ENCODE measurements at regions of chr14 and their contacts with region 1.

Region 1: DNA sequence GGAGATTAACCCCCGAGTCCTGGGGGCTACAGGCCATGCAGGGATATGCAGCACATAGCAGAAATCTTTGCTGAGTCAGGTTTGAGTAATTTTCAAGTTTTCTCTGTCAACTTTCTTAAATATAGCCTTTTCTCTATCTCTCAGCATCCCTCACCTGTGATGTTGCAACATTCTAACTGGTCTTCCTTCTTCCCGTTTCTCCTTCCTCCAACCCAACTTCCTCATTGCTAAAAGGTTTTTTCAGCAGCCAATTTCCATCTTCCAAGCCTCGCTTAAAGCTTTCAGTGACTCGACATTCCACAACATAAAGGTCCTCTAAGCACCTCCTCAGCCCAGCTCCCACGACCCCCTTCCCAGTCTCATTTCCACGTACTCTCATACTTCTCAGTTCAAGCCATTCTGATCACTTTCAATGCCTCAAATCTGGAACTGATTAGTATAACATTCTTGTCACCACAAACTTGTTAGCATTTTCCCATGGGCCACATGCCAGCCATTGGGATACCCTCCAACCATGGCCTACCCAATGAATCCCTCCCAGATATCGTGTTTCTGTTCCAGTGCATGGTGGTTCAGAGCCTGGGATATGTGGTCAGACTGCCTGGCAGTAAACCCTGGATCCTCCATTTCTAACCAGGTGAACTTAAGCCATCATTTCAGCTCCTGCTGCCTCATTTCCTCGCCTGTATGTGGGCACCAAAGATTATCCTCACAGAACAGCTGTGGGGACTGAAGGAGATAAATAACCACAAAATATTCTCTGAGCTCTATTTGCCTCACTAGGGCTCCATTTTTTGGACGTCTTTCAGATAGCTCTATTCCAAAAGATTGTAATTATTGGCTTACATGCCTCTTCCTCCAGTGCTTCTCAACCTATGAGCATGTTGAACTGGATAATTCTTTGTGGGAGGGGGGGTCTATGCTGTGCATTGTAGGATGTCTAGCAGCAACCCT is 65.8 kb downstream of the KCNK10 start:
- DNase-seq: no peak
- H3K4me3 ChIP-seq: no peak overlapping the region
- H3K27ac ChIP-seq: no peak overlapping the region
- H3K4me1 ChIP-seq: no peaks in the 10 kb centered on the region
- H3K27me3 ChIP-seq: no peaks in the 10 kb centered on the region
- CTCF ChIP-seq: no peak
- EP300 ChIP-seq: no peak
- POLR2A ChIP-seq: no peak
- RAD21 ChIP-seq: no peak

Region 2: GRCh38 chr14:88063845-88064244 is 193.4 kb before region 1 on chr14:
- CTCF ChIA-PET with region 1: no interaction called
- POLR2A ChIA-PET with region 1: no interaction called
- DNase-seq: no peak
- H3K4me3 ChIP-seq: no peak overlapping the region
- H3K27ac ChIP-seq: no peak overlapping the region
- H3K4me1 ChIP-seq: no peaks in the 10 kb centered on the region
- H3K27me3 ChIP-seq: no peaks in the 10 kb centered on the region
- CTCF ChIP-seq: no peak
- EP300 ChIP-seq: no peak
- POLR2A ChIP-seq: no peak
- RAD21 ChIP-seq: no peak

Region 3: DNA sequence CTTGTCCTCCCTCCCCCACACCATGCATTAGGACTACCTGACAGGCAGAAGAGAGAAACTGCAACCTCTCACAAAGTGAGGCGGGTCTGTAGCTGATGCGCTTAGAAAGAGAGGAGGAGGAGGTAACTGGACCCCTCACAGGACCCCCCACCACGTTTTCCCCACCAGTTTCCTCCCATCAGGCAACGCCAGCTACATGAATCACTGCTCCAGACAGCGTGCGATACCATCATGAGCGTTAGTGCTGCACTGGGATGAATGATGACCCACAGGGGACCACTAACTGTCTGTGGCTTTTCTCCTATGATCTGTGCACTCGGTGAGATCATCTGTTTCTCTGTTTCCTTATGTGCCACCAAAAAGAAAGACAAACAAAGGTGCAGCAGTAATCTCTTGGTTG is 12.0 kb before region 1 on chr14:
- CTCF ChIA-PET with region 1: interaction called, 11 read pairs
- POLR2A ChIA-PET with region 1: no interaction called
- DNase-seq: no peak
- H3K4me3 ChIP-seq: no peak overlapping the region
- H3K27ac ChIP-seq: no peak overlapping the region
- H3K4me1 ChIP-seq: no peaks in the 10 kb centered on the region; a peak in 1 of 7 replicates
- H3K27me3 ChIP-seq: no peaks in the 10 kb centered on the region
- CTCF ChIP-seq: no peak
- EP300 ChIP-seq: no peak
- POLR2A ChIP-seq: no peak
- RAD21 ChIP-seq: no peak

Region 4: DNA sequence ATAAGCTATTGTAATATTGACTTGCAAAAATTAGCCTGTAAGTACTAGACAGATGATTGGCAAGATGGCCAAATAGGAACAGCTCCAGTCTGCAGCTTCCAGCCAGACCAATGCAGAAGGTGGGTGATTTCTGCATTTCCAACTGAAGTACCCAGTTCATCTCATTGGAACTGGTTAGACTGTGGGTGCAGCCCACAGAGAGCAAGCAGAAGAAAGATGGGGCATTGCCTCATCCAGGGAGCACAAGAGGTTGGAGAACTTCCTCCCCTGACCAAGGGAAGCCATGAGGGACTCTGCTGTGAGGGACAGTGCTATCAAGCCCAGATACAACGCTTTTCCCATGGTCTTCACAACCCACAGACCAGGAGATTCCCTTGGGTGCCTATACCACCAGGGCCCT is 112.2 kb after region 1 on chr14:
- CTCF ChIA-PET with region 1: no interaction called
- POLR2A ChIA-PET with region 1: no interaction called
- DNase-seq: no peak
- H3K4me3 ChIP-seq: no peak overlapping the region
- H3K27ac ChIP-seq: no peak overlapping the region
- H3K4me1 ChIP-seq: peaks cover 0 to 8% (median 3%) of the 10 kb centered on the region in 4 experiments; a peak in 3 of 7 replicates
- H3K27me3 ChIP-seq: no peaks in the 10 kb centered on the region
- CTCF ChIP-seq: no peak
- EP300 ChIP-seq: no peak
- POLR2A ChIP-seq: no peak
- RAD21 ChIP-seq: no peak

Region 5: GRCh38 chr14:88411039-88411438 is 153.8 kb after region 1 on chr14:
- CTCF ChIA-PET with region 1: no interaction called
- POLR2A ChIA-PET with region 1: no interaction called
- DNase-seq: peak in 1 of 2 experiments; percentile 42
- H3K4me3 ChIP-seq: no peak overlapping the region
- H3K27ac ChIP-seq: no peak overlapping the region
- H3K4me1 ChIP-seq: no peaks in the 10 kb centered on the region
- H3K27me3 ChIP-seq: no peaks in the 10 kb centered on the region
- CTCF ChIP-seq: no peak
- EP300 ChIP-seq: no peak
- POLR2A ChIP-seq: no peak
- RAD21 ChIP-seq: no peak

Region 6: DNA sequence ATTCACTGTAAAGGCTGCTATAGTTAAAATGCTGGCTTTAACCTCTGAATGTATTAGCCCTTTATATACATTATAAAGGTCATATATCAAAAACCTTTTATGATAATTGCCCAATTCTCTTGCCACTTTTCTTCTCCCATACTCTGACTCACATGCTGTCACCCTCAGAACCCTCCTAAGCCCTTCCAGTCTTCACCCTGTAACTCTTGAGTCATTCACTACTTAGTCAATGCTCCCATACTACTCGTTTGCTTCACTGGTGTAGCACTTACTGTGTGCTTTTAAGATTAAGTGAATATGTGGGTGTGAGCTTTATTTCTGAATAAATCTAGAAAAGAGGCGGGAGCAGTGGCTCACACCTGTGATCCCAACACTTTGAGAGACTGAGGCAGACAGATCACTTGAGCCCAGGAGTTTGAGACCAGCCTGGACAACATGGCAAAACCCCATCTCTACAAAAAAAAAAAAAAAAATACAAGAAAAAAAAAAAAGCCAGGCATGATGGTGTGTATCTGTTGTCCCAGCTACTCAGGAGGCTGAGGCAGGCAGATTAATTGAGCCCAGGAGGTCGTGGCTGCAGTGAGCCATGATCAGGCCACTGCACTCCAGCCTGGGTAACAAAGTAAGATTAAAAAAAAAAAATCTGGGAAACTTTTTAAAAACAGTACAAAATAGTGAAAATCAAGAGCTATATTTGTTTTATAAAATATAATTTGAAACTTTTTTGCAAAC is 165.8 kb after region 1 on chr14:
- CTCF ChIA-PET with region 1: no interaction called
- POLR2A ChIA-PET with region 1: no interaction called
- DNase-seq: no peak
- H3K4me3 ChIP-seq: no peak overlapping the region
- H3K27ac ChIP-seq: no peak overlapping the region
- H3K4me1 ChIP-seq: no peaks in the 10 kb centered on the region
- H3K27me3 ChIP-seq: no peaks in the 10 kb centered on the region
- CTCF ChIP-seq: no peak
- EP300 ChIP-seq: no peak
- POLR2A ChIP-seq: no peak
- RAD21 ChIP-seq: no peak